Mammary epithelial cell (primary cell): ENCODE measurements at regions of chr10 and their contacts with region 1.

Region 1: GRCh38 chr10:122565728-122566206 is 5.2 kb downstream of the DMBT1 start:
- DNase-seq: peak; percentile 78
- H3K4me3 ChIP-seq: peak overlapping the region in 2 of 3 experiments; percentile 22 to 27
- H3K27ac ChIP-seq: no peak overlapping the region
- H3K4me1 ChIP-seq: peaks cover 6% of the 10 kb centered on the region
- H3K27me3 ChIP-seq: no peaks in the 10 kb centered on the region
- CTCF ChIP-seq: peak; percentile 87 to 89

Region 2: GRCh38 chr10:122279725-122280141 is 286.0 kb before region 1 on chr10:
- CTCF ChIA-PET with region 1: interaction called, 3 read pairs
- dilution Hi-C with region 1: no loop called
- in situ Hi-C with region 1: loop called in 1 of 2 experiments (anchors 25 kb)
- intact Hi-C with region 1: loop called (anchors 1 kb)
- DNase-seq: peak; percentile 46
- H3K4me3 ChIP-seq: no peak overlapping the region
- H3K27ac ChIP-seq: no peak overlapping the region
- H3K4me1 ChIP-seq: peaks cover 16% of the 10 kb centered on the region
- H3K27me3 ChIP-seq: no peaks in the 10 kb centered on the region
- CTCF ChIP-seq: peak; percentile 83 to 93

Region 3: DNA sequence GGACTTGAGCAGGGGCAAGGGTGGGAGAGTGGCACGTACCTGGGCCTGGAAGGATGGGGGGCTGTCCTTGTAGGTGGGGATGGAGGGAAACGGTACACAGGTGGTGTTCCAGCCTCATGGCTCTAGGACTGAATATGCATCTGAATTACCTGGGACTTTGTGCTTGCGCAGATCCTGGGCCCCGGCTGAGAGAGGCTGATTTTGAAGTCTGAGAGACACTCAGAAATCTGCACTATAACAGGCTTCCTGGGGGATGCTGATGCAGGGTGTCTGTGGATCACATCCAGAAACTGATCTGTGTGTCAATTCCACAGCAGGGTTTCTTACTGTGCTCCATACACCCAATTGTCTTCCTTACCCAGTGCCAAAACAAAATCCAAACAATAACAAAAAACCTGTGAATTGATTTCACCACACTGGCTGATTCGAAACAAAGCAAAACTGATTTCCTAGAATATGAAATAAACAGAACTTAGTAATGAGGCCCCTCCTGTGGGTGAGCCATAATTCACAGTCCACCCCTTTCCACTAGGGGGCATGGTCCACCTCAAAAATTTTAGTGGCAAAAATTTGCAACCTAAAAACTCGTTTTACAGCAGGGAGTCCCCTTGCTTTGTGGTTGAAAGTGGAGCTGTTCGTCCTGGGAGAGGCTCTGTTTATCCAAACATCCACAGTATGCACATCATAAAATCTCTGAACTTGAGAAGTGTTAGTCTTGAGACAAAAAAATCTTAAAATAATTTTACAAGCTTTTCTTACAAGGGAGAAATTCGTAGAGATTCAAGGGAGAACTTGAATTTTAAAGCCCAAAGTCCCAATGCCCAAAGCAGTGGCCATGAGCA is 223.3 kb before region 1 on chr10:
- CTCF ChIA-PET with region 1: no interaction called
- dilution Hi-C with region 1: no loop called
- in situ Hi-C with region 1: no loop called
- intact Hi-C with region 1: loop called (anchors 1 kb)
- DNase-seq: peak; percentile 46
- H3K4me3 ChIP-seq: no peak overlapping the region
- H3K27ac ChIP-seq: no peak overlapping the region
- H3K4me1 ChIP-seq: peaks cover 12% of the 10 kb centered on the region
- H3K27me3 ChIP-seq: no peaks in the 10 kb centered on the region
- CTCF ChIP-seq: peak; percentile 76 to 79

Region 4: GRCh38 chr10:122441961-122442360 is 123.8 kb before region 1 on chr10:
- CTCF ChIA-PET with region 1: interaction called, 5 read pairs
- dilution Hi-C with region 1: no loop called
- in situ Hi-C with region 1: no loop called
- intact Hi-C with region 1: loop called (anchors 2 kb)
- DNase-seq: peak; percentile 57
- H3K4me3 ChIP-seq: no peak overlapping the region
- H3K27ac ChIP-seq: no peak overlapping the region
- H3K4me1 ChIP-seq: peaks cover 2% of the 10 kb centered on the region
- H3K27me3 ChIP-seq: no peaks in the 10 kb centered on the region
- CTCF ChIP-seq: no peak

Region 5: GRCh38 chr10:122468926-122469781 is 96.6 kb before region 1 on chr10:
- CTCF ChIA-PET with region 1: no interaction called
- dilution Hi-C with region 1: no loop called
- in situ Hi-C with region 1: loop called in 1 of 2 experiments (anchors 10 kb)
- intact Hi-C with region 1: loop called (anchors 1 kb)
- DNase-seq: peak; percentile 99
- H3K4me3 ChIP-seq: no peak overlapping the region
- H3K27ac ChIP-seq: peak overlapping the region; percentile 58
- H3K4me1 ChIP-seq: peaks cover 65% of the 10 kb centered on the region
- H3K27me3 ChIP-seq: no peaks in the 10 kb centered on the region
- CTCF ChIP-seq: peak in 1 of 2 donors; percentile 29

Region 6: GRCh38 chr10:122510326-122510725 is 55.4 kb before region 1 on chr10:
- CTCF ChIA-PET with region 1: no interaction called
- dilution Hi-C with region 1: no loop called
- in situ Hi-C with region 1: no loop called
- intact Hi-C with region 1: loop called (anchors 1 kb)
- DNase-seq: peak; percentile 98
- H3K4me3 ChIP-seq: no peak overlapping the region
- H3K27ac ChIP-seq: peak overlapping the region; percentile 83
- H3K4me1 ChIP-seq: peaks cover 39% of the 10 kb centered on the region
- H3K27me3 ChIP-seq: no peaks in the 10 kb centered on the region
- CTCF ChIP-seq: no peak

Region 7: GRCh38 chr10:122525788-122526187 is 40.0 kb before region 1 on chr10:
- CTCF ChIA-PET with region 1: no interaction called
- dilution Hi-C with region 1: no loop called
- in situ Hi-C with region 1: no loop called
- intact Hi-C with region 1: no loop called
- DNase-seq: no peak
- H3K4me3 ChIP-seq: no peak overlapping the region
- H3K27ac ChIP-seq: no peak overlapping the region
- H3K4me1 ChIP-seq: peaks cover 4% of the 10 kb centered on the region
- H3K27me3 ChIP-seq: no peaks in the 10 kb centered on the region
- CTCF ChIP-seq: peak; percentile 32 to 48

Region 8: DNA sequence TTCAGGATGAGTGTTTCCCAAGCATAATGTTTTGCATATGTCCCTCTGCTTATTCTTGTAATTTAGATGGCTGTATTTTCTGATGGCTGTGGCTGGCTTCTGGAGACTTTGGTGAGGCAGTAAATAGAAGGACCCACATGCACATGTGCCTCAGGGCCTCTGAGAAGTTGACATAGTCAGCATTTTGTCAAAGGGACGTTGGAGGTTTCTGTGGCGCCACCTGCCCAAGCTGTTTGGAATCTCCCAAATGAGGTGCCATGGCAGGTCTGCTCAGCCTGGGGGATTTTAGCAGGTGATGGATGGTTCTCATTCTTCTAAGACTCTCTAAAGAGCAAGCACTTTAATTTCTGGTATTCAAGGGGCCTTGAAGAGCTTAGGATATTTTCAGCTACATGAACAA is 104.1 kb after region 1 on chr10:
- CTCF ChIA-PET with region 1: no interaction called
- dilution Hi-C with region 1: no loop called
- in situ Hi-C with region 1: no loop called
- intact Hi-C with region 1: no loop called
- DNase-seq: no peak
- H3K4me3 ChIP-seq: no peak overlapping the region
- H3K27ac ChIP-seq: no peak overlapping the region
- H3K4me1 ChIP-seq: no peaks in the 10 kb centered on the region
- H3K27me3 ChIP-seq: peaks cover 1% of the 10 kb centered on the region
- CTCF ChIP-seq: no peak